Activated naive CD4-positive, alpha-beta T cell treated with anti-CD3 and anti-CD28 coated beads for 36 hours (primary cell): ENCODE measurements at regions of chr7 and their contacts with region 1.

Region 1: GRCh38 chr7:100726996-100727761 is 6.2 kb upstream of the ZAN start:
- DNase-seq: no peak
- H3K4me3 Mint-ChIP-seq: no peak overlapping the region
- H3K27ac Mint-ChIP-seq: no peak overlapping the region
- H3K4me1 Mint-ChIP-seq: peaks cover 3% of the 10 kb centered on the region
- H3K27me3 Mint-ChIP-seq: peaks cover 14% of the 10 kb centered on the region

Region 2: DNA sequence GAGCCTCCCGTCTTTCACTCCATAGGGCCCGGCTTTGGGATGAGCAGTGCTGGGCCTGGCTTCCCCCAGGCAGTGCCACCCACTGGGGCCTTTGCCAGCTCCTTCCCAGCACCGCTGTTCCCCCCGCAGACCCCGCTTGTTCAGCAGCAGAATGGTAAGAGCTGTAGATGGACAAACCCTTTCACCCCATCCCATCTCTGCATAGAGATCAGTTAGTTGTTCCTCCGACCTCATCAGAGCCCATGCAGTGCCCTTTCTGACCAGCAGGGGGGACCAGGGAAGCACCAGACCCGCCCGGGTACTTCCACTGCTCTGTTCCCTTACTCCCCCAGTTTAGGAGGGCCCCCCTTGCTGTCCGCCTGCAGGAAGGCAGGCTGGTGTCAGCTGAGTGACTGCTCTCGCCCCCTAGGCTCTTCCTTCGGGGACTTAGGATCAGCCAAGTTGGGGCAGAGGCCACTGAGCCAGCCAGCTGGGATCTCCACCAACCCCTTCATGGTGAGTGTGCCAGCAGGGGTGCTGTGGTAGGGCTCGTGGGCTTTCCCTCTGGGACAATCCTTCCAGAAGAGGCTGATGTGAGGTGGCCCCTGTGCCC is 163.3 kb before region 1 on chr7:
- CTCF ChIA-PET with region 1: interaction called, 5 read pairs
- intact Hi-C with region 1: loop called (anchors 1 kb)
- DNase-seq: peak; percentile 90
- H3K4me3 Mint-ChIP-seq: no peak overlapping the region
- H3K27ac Mint-ChIP-seq: no peak overlapping the region
- H3K4me1 Mint-ChIP-seq: peaks cover 15% of the 10 kb centered on the region
- H3K27me3 Mint-ChIP-seq: no peaks in the 10 kb centered on the region

Region 3: DNA sequence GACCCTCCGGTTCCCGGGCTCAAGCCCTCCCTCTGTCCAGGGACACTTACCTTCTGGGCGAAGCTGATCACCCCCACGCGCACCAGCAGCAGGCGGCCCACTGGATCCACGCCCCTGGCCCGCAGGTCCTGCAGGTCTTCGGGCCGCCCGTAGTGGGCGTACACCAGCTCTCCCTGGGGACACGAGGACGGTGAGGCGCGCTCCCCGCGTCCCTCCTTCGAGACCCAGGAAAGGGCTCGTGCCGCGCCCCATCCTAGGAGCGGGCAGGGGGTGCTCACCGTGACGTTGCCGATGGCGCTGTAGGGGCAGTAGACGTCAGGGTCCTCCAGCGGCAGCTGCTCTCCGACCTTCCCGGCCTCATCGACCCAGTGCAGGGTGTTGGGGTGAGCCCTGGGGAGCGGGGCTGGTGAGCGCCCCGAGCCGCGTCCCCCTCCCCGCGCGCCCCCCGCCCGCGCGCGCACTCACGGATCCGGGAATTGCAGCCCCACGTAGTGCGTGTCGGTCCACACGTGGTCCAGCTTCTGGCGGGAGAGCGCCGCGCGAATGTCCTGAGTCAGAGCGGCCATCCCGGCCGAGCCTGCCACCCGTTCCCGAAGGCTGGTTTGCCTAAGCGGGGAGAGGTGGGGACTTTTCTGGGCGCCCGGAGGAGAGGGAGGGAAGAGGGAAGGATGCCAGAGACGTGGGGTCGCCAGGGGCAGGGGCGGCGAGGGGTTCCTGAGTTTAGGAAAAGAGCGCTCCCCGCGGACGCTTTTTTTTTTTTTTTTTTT is 94.0 kb before region 1 on chr7:
- CTCF ChIA-PET with region 1: interaction called, 5 read pairs
- intact Hi-C with region 1: loop called (anchors 5 kb)
- DNase-seq: peak; percentile 71
- H3K4me3 Mint-ChIP-seq: peak overlapping the region; percentile 80
- H3K27ac Mint-ChIP-seq: peak overlapping the region; percentile 76
- H3K4me1 Mint-ChIP-seq: peaks cover 22% of the 10 kb centered on the region
- H3K27me3 Mint-ChIP-seq: no peaks in the 10 kb centered on the region

Region 4: GRCh38 chr7:100745184-100745583 is 18.0 kb after region 1 on chr7:
- CTCF ChIA-PET with region 1: interaction called, 6 read pairs
- intact Hi-C with region 1: loop called (anchors 1 kb)
- DNase-seq: peak; percentile 56
- H3K4me3 Mint-ChIP-seq: peak overlapping the region; percentile 75
- H3K27ac Mint-ChIP-seq: no peak overlapping the region
- H3K4me1 Mint-ChIP-seq: peaks cover 4% of the 10 kb centered on the region
- H3K27me3 Mint-ChIP-seq: peaks cover 13% of the 10 kb centered on the region